ENCODE measurements at regions of chr18 and their contacts with region 1.

Region 1: DNA sequence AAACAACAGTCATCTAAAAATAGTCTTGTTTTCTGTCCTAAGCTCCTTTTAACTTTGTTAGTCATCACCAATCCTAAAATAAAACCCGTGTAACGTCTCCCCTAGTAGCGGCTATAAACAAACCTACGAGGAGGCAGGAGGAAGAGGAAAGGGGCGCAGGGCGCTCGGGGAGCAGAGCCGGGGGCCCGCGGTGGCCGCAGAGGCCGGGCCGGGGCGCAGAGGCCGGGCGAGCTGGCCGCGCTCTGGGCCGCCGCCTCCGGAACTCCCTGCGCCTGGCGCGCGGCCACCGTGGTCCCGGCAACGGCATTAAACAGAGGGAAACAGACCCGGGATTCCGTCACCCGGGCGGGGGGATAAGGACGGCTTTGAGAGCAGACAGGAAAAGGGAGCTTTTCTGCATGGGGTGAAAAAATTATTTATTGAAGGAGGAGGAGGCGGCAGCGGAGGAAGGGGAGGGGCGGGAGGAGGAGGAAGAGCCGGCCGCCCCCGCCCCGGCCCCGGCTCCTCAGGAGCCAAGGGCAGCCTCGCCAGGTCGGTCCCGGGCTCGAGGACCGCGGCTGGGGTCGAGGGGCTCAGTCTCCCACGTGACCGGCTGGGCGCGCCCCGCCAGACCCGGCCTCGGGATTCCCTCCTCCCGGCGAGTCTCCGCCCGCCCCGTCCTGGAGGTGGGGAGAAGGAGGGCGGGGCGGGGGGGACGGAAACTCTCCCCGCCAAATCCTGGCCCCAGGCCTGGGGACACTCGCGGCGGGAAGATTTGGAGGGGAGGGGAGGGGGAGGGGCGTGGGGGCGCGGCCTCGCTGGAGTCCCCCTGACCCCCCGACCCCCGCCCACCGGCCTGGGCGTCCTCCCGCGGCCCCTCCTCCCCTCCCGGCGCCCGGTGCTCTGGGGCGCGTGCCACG is 1.8 kb upstream of the NFATC1 start:
- DNase-seq: peak in 7 of 14 experiments; percentile 44 to 73 (median 54)
- ATAC-seq: peak; percentile 18
- H3K4me3 ChIP-seq: peak overlapping the region; percentile 48
- H3K4me3 Mint-ChIP-seq: peak overlapping the region; percentile 98
- H3K27ac ChIP-seq: no peak overlapping the region
- H3K27ac Mint-ChIP-seq: peak overlapping the region; percentile 93
- H3K4me1 ChIP-seq: peaks cover 46% of the 10 kb centered on the region
- H3K4me1 Mint-ChIP-seq: peaks cover 45% of the 10 kb centered on the region
- H3K27me3 ChIP-seq: peaks cover 0 to 3% of the 10 kb centered on the region in 2 experiments
- H3K27me3 Mint-ChIP-seq: no peaks in the 10 kb centered on the region
- CTCF ChIP-seq: no peak

Region 2: DNA sequence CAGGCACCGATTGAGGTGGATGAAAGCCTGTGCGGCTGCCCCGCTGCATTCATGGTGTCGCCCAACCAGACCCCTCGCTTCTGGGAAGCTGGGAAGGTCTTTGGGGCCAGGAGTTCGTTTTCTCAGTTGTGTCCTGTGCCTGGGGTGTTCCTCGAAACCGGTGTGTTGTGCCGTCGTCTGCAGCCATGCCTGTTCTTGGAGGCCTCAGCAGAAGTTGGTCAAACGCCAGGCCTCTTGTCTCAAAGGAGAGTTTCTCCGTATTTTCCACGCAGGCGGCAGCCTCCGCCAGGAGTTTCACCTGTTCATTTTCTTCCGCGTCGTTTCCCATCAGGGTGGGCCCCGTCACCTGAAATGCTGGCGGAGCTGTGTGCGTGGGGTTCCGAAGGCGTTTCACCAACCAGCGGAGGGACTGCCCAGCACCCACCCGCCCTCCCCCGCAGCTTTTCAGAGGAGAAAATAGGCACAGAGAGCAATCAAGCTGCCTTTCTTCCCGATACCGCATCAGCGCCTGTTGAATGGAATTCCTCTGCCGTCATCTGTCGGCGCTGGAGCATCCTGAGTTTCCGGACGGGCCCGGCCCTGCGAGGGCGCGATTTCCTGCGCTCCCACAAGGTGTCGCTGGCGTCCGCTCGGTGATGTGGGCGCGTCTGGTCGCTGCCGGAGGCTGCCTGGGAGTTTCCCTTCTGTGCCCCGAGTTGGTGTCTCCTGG is 15.2 kb before region 1 on chr18:
- CTCF ChIA-PET with region 1: interaction called, 16 read pairs
- POLR2A ChIA-PET with region 1: interaction called, 4 read pairs
- intact Hi-C with region 1: loop called in 1 of 2 experiments (anchors 2 kb)
- DNase-seq: peak; percentile 71 to 92 (median 80)
- ATAC-seq: peak; percentile 96
- H3K4me3 ChIP-seq: no peak overlapping the region
- H3K4me3 Mint-ChIP-seq: no peak overlapping the region
- H3K27ac ChIP-seq: no peak overlapping the region
- H3K27ac Mint-ChIP-seq: no peak overlapping the region
- H3K4me1 ChIP-seq: peaks cover 12% of the 10 kb centered on the region
- H3K4me1 Mint-ChIP-seq: peaks cover 10% of the 10 kb centered on the region
- H3K27me3 ChIP-seq: no peaks in the 10 kb centered on the region
- H3K27me3 Mint-ChIP-seq: no peaks in the 10 kb centered on the region
- CTCF ChIP-seq: peak; percentile 97

Region 3: DNA sequence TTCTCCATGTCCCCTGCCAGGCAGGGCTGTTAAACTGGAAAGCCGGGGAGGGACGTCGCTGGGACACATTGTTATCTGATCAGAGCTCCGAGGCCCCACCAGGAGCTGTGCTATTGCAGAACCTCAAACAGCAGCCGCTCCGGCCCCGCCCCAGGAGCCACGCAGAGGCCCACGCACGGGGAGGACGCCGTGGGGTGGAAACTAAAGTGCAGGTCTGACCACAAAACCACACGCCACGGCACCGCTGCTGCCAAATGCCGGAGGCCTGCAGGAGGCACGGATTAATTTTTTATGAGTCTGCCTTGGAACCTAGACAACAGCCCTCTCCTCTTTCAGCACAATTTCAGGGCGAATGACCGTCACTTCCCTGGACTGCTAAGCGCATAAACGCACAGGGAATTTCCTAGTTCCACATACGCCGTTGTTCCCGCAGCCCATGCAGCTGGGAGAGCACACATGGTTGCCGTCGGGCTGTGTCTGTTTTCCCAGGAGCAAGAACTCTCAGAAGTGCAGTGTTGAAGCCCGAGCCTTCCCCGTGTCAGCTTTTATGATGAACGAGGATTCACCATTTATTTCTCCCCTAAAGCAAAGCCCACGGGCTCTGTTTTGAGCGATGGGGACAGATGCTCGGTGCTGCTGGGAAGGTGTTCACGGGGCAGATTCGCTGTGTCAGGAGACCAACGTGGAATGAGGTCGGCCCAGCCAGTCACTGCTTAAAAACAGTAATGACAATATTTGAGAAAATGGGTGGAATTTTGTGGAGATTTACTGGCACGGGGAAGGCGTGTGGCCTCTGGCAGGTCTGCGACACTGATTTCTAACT is 45.5 kb after region 1 on chr18:
- CTCF ChIA-PET with region 1: interaction called, 3 read pairs
- POLR2A ChIA-PET with region 1: no interaction called
- intact Hi-C with region 1: loop called in 1 of 2 experiments (anchors 5 kb)
- DNase-seq: peak in 13 of 14 experiments; percentile 10 to 77 (median 41)
- ATAC-seq: peak; percentile 51
- H3K4me3 ChIP-seq: no peak overlapping the region
- H3K4me3 Mint-ChIP-seq: peak overlapping the region; percentile 39
- H3K27ac ChIP-seq: no peak overlapping the region
- H3K27ac Mint-ChIP-seq: peak overlapping the region; percentile 81
- H3K4me1 ChIP-seq: peaks cover 66% of the 10 kb centered on the region
- H3K4me1 Mint-ChIP-seq: peaks cover 56% of the 10 kb centered on the region
- H3K27me3 ChIP-seq: no peaks in the 10 kb centered on the region
- H3K27me3 Mint-ChIP-seq: no peaks in the 10 kb centered on the region
- CTCF ChIP-seq: no peak

Region 4: DNA sequence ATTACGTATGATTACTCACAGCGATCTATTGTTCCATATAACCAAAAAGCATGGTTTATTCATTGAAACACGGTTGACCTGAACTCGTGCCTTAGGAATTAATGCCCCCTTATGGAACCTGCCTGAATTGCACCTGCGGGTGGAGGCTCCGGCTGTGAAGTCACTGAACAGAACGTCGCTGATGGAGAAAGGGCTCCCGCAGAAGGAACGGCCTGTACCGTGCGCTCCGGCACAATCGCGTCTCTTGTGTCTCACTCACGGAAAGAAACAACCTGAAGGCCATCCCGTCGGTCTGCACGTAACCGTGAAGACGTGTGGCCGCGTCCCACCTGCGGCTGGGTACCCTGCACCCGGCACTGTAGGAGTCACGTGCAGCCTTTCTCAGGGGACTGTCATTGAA is 135.0 kb after region 1 on chr18:
- CTCF ChIA-PET with region 1: interaction called, 5 read pairs
- POLR2A ChIA-PET with region 1: interaction called, 34 read pairs
- intact Hi-C with region 1: loop called in 1 of 2 experiments (anchors 5 kb)
- DNase-seq: peak; percentile 62 to 86 (median 72)
- ATAC-seq: peak; percentile 49
- H3K4me3 ChIP-seq: no peak overlapping the region
- H3K4me3 Mint-ChIP-seq: peak overlapping the region; percentile 3
- H3K27ac ChIP-seq: no peak overlapping the region
- H3K27ac Mint-ChIP-seq: peak overlapping the region; percentile 57
- H3K4me1 ChIP-seq: peaks cover 26% of the 10 kb centered on the region
- H3K4me1 Mint-ChIP-seq: peaks cover 39% of the 10 kb centered on the region
- H3K27me3 ChIP-seq: peaks cover 0 to 5% of the 10 kb centered on the region in 2 experiments
- H3K27me3 Mint-ChIP-seq: no peaks in the 10 kb centered on the region
- CTCF ChIP-seq: peak; percentile 95

Measured in CD4-positive, alpha-beta T cell (primary cell).